Heart right ventricle (tissue), 16 donors: ENCODE measurements at regions of chr1 and their contacts with region 1.

Region 1: GRCh38 chr1:225652729-225653462 is at the start of gene ENAH:
- DNase-seq: peak; percentile 84 to 87
- ATAC-seq: peak; percentile 79 to 90 (median 88)
- H3K4me3 ChIP-seq: peak within 1 kb of the TSS; percentile 86 to 99 (median 94)
- H3K27ac ChIP-seq: peak within 1 kb of the TSS; percentile 95 to 100 (median 98)
- H3K4me1 ChIP-seq: peaks cover 0 to 59% (median 45%) of the 10 kb centered on the region in 9 donors
- H3K27me3 ChIP-seq: peaks cover 0 to 50% (median 0%) of the 10 kb centered on the region in 7 donors
- CTCF ChIP-seq: no peak
- total RNA-seq, gene ENAH: 63.3 to 201 (median 115) TPM

Region 2: DNA sequence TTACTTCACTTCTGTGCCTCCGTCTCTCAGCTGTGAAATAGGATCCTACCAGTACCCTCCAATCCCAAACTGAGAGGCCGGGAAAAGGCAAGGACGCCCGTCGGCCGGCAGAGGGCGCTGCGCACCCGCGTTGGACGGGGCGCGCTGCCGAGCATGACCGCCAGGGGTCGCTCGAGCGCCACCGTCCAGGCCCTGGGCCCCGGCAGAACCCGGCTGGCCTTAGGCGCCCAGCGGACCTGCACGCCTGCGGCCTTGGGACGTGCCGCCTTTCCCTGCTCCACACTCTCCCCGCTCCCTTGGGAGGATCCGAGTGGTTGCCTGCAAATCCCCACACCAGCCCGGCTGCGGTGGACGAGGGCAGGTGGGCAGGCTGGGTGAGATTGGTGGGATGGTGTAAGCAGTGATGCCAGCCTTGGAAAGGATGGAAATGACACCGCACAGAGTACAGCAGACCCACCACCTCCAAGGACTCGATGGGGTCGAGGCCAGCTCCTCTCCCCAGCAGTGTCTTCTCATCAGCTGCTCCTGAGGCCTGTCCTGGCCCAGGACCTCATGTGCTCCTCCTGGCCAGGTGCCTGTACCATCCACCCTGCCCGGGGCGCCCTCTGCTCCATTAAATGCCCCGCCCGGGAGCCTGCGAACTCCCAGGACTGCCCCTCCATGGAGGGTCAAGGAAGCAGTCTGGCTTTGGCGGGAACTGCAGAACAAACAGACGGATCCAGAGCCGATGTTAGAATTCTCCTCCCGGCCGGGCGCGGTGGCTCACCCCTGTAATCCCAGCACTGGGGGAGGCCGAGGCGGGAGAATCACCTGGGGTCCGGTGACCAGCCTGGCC is 177.7 kb before region 1 on chr1:
- intact Hi-C with region 1: loop called in 4 of 10 experiments (anchors 5 to 10 kb)
- DNase-seq: peak in 1 of 2 donors; percentile 69
- ATAC-seq: peak; percentile 84 to 90 (median 90)
- H3K4me3 ChIP-seq: peak overlapping the region in 4 of 10 donors; percentile 19 to 35 (median 26)
- H3K27ac ChIP-seq: no peak overlapping the region
- H3K4me1 ChIP-seq: peaks cover 0 to 9% (median 6%) of the 10 kb centered on the region in 9 donors
- H3K27me3 ChIP-seq: no peaks in the 10 kb centered on the region
- CTCF ChIP-seq: peak; percentile 100

Region 3: GRCh38 chr1:225508538-225509375 is 144.1 kb before region 1 on chr1:
- intact Hi-C with region 1: no loop called
- DNase-seq: peak in 1 of 2 donors; percentile 66
- ATAC-seq: peak; percentile 94 to 100 (median 98)
- H3K4me3 ChIP-seq: no peak overlapping the region
- H3K27ac ChIP-seq: peak overlapping the region; percentile 2 to 88 (median 76)
- H3K4me1 ChIP-seq: peaks cover 0 to 36% (median 18%) of the 10 kb centered on the region in 9 donors
- H3K27me3 ChIP-seq: no peaks in the 10 kb centered on the region
- CTCF ChIP-seq: no peak

Region 4: GRCh38 chr1:225554216-225554812 is 98.6 kb before region 1 on chr1:
- intact Hi-C with region 1: loop called in 4 of 10 experiments (anchors 5 to 10 kb)
- DNase-seq: no peak
- ATAC-seq: peak in 3 of 8 donors; percentile 38 to 51 (median 42)
- H3K4me3 ChIP-seq: no peak overlapping the region
- H3K27ac ChIP-seq: no peak overlapping the region
- H3K4me1 ChIP-seq: peaks cover 0 to 25% (median 13%) of the 10 kb centered on the region in 9 donors
- H3K27me3 ChIP-seq: no peaks in the 10 kb centered on the region
- CTCF ChIP-seq: peak; percentile 36 to 78 (median 61)

Region 5: GRCh38 chr1:225578251-225578950 is 74.5 kb before region 1 on chr1:
- intact Hi-C with region 1: loop called in 3 of 10 experiments (anchors 5 to 10 kb)
- DNase-seq: no peak
- ATAC-seq: peak in 1 of 8 donors; percentile 22
- H3K4me3 ChIP-seq: no peak overlapping the region
- H3K27ac ChIP-seq: peak overlapping the region in 5 of 10 donors; percentile 13 to 78 (median 27)
- H3K4me1 ChIP-seq: peaks cover 0 to 70% (median 48%) of the 10 kb centered on the region in 9 donors
- H3K27me3 ChIP-seq: no peaks in the 10 kb centered on the region
- CTCF ChIP-seq: no peak

Region 6: DNA sequence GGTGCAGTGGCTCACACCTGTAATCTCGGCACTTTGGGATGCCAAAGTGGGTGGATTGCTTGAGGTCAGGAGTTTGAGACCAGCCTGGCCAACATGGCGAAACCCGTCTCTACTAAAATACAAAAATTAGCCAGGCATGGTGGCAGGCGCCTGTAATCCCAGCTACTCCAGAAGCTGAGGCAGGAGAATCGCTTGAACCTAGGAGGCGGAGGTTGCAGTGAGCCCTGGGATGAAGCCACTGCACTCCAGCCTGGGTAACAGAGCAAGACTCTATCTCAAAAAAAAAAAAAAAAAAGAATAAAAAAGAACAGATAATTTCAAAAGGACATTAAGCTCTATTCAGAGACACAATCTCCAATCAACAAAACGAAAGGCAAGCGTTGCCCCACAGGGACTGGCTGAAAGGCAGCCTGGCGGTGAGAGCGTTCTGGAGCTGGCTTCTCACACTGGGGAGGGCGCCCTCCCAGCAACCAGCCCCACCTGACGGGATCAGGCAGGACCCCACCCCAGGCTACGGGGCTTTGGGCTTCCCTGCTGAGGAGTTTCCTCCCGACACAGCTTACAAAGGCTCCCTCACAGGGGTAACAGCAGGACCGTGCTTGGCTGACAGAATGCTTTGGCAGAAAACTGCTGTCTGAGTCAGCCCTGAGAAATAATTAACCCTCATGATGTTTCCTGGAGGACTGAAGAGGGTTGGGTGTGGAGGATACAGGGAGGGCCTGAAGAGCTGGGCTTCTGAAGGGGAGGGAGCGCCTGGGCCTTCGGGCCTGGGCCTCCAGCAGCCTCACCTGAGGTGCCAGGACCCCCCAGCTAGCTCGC is 93.7 kb after region 1 on chr1:
- intact Hi-C with region 1: loop called in 3 of 10 experiments (anchors 5 kb)
- DNase-seq: peak; percentile 69 to 79
- ATAC-seq: peak; percentile 90 to 98 (median 96)
- H3K4me3 ChIP-seq: peak overlapping the region in 9 of 10 donors; percentile 27 to 53 (median 48)
- H3K27ac ChIP-seq: peak overlapping the region; percentile 82 to 93 (median 91)
- H3K4me1 ChIP-seq: peaks cover 7 to 51% (median 32%) of the 10 kb centered on the region in 9 donors
- H3K27me3 ChIP-seq: no peaks in the 10 kb centered on the region
- CTCF ChIP-seq: peak in 4 of 9 donors; percentile 11 to 40 (median 36)

Region 7: DNA sequence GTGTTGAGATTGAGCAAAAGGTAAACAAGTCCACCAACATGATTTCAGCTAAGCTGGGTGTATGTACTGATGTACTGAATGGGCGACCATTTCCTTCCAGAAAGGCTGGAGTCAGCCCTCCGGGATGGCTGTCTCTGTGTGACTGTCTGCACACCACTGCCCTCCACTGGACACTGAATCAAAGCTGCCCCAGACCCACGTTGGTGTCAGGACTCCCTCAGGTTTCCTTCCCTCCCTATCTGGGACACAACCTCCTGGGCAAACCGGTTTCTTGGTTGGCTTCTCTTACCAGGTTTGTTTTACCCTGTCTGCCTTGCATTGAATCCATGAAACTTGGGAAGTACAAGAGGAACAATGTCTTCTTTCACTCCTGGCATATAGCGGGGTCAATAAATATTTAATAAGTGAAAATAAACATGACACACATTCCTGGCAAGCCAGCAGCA is 119.5 kb after region 1 on chr1:
- intact Hi-C with region 1: loop called in 8 of 10 experiments (anchors 2 to 10 kb)
- DNase-seq: peak; percentile 72 to 90
- ATAC-seq: peak; percentile 81 to 92 (median 87)
- H3K4me3 ChIP-seq: no peak overlapping the region
- H3K27ac ChIP-seq: peak overlapping the region in 7 of 10 donors; percentile 26 to 67 (median 42)
- H3K4me1 ChIP-seq: peaks cover 19 to 74% (median 52%) of the 10 kb centered on the region in 9 donors
- H3K27me3 ChIP-seq: no peaks in the 10 kb centered on the region
- CTCF ChIP-seq: peak; percentile 81 to 94 (median 91)